ENCODE measurements at regions of chr1 and their contacts with region 1.

Region 1: GRCh38 chr1:230917284-230918135 is 49.2 kb upstream of the C1orf198 start:
- DNase-seq: peak; percentile 81
- H3K4me3 Mint-ChIP-seq: no peak overlapping the region
- H3K27ac Mint-ChIP-seq: peak overlapping the region; percentile 35
- H3K4me1 Mint-ChIP-seq: no peaks in the 10 kb centered on the region
- H3K27me3 Mint-ChIP-seq: no peaks in the 10 kb centered on the region

Region 2: DNA sequence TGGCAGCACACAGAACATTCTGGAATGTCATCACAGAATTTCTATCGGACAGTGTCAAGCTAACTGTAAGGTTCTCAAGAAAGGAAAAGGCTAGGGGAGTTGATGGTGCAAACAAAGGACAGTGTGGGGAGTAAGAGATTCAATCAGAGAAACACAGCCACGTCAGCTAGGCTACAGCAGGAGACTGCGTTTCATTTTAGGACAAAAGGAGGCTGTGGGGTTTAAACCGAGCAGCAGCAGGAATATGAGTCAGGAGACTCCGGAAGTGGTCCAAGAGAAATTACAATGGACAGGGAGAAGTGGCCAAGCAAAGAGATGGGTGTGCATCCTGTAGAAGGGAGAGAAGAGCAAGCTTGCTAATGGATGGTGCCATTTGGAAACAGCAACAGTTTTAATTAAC is 11.8 kb before region 1 on chr1:
- CTCF ChIA-PET with region 1: interaction called, 10 read pairs
- DNase-seq: no peak
- H3K4me3 Mint-ChIP-seq: no peak overlapping the region
- H3K27ac Mint-ChIP-seq: no peak overlapping the region
- H3K4me1 Mint-ChIP-seq: peaks cover 3% of the 10 kb centered on the region
- H3K27me3 Mint-ChIP-seq: no peaks in the 10 kb centered on the region

Region 3: GRCh38 chr1:231040019-231040799 is 122.7 kb after region 1 on chr1 and contains the start of gene FAM89A:
- CTCF ChIA-PET with region 1: no interaction called
- DNase-seq: peak; percentile 76
- H3K4me3 Mint-ChIP-seq: peak within 1 kb of the TSS; percentile 73
- H3K27ac Mint-ChIP-seq: peak within 1 kb of the TSS; percentile 44
- H3K4me1 Mint-ChIP-seq: peaks cover 31% of the 10 kb centered on the region
- H3K27me3 Mint-ChIP-seq: peaks cover 41% of the 10 kb centered on the region

Region 4: GRCh38 chr1:231053493-231054162 is 136.1 kb after region 1 on chr1:
- CTCF ChIA-PET with region 1: no interaction called
- DNase-seq: peak; percentile 28
- H3K4me3 Mint-ChIP-seq: peak overlapping the region; percentile 2
- H3K27ac Mint-ChIP-seq: peak overlapping the region; percentile 0
- H3K4me1 Mint-ChIP-seq: peaks cover 16% of the 10 kb centered on the region
- H3K27me3 Mint-ChIP-seq: peaks cover 16% of the 10 kb centered on the region

Region 5: GRCh38 chr1:231091831-231092301 is 174.4 kb after region 1 on chr1:
- CTCF ChIA-PET with region 1: interaction called, 15 read pairs
- DNase-seq: peak; percentile 53
- H3K4me3 Mint-ChIP-seq: no peak overlapping the region
- H3K27ac Mint-ChIP-seq: no peak overlapping the region
- H3K4me1 Mint-ChIP-seq: no peaks in the 10 kb centered on the region
- H3K27me3 Mint-ChIP-seq: peaks cover 38% of the 10 kb centered on the region

Region 6: DNA sequence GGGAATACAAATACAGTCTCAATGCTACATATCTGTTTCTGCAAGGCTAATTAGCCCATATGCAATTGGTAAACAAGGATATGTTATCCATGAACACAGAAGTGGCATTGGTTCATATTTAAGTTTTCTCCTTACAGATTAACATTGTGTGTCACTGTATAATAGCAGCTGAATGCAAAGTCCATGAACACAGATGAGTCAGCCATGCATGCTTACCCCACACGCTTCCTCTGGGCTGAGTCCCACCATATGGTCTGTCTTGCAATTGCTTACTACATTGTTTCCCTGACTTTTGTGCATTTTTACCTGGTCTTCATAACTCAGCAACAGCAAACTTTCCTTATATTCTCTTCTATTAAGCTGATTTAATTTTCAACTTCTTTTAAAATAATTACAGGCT is 569.5 kb after region 1 on chr1:
- CTCF ChIA-PET with region 1: no interaction called
- DNase-seq: no peak
- H3K4me3 Mint-ChIP-seq: no peak overlapping the region
- H3K27ac Mint-ChIP-seq: no peak overlapping the region
- H3K4me1 Mint-ChIP-seq: no peaks in the 10 kb centered on the region
- H3K27me3 Mint-ChIP-seq: peaks cover 14% of the 10 kb centered on the region

Measured in activated naive CD4-positive, alpha-beta T cell treated with anti-CD3 and anti-CD28 coated beads, Interleukin-2, amount 10 ng/mL, durations not matched to agents 7 days and 5 days (primary cell).